ENCODE measurements at regions of chr17 and their contacts with region 1.

Region 1: GRCh38 chr17:2244545-2245525 is 58.8 kb downstream of the SMG6 start:
- DNase-seq: peak; percentile 63 to 82 (median 74)
- ATAC-seq: peak; percentile 100
- H3K4me3 ChIP-seq: no peak overlapping the region
- H3K4me3 Mint-ChIP-seq: peak overlapping the region in 1 of 10 donors; percentile 52
- H3K27ac ChIP-seq: no peak overlapping the region
- H3K27ac Mint-ChIP-seq: peak overlapping the region in 7 of 9 donors; percentile 60 to 96 (median 87)
- H3K4me1 ChIP-seq: peaks cover 0 to 6% of the 10 kb centered on the region in 2 donors
- H3K4me1 Mint-ChIP-seq: peaks cover 9 to 82% (median 39%) of the 10 kb centered on the region in 7 donors
- H3K27me3 ChIP-seq: no peaks in the 10 kb centered on the region
- H3K27me3 Mint-ChIP-seq: no peaks in the 10 kb centered on the region

Region 2: DNA sequence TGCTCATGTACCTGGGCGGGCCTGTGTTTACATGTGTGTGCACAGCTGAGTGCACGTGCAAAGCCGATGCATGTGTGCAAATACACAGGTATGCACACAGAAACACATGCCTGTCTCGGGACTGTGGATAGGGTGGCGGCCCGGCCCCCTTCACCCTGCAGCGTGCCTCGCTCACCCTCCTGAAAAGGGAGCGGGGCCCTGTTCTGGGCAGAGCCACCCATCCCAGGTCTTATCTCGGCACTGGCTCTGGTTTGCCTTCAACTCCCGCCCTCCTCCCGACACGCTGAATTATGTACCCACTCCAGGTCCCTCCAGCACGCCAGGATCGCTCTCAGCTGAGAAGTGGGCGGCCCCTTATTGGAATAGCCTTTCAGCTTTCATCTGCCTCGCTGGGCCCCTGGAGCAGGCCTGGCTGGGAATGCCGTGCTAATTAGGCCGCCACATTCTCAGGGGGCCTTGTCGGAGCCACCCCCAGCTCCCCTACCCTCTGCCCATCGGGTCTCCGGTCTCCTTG is 297.5 kb before region 1 on chr17:
- CTCF ChIA-PET with region 1: no interaction called
- POLR2A ChIA-PET with region 1: no interaction called
- intact Hi-C with region 1: no loop called
- DNase-seq: no peak
- ATAC-seq: no peak
- H3K4me3 ChIP-seq: no peak overlapping the region
- H3K4me3 Mint-ChIP-seq: no peak overlapping the region
- H3K27ac ChIP-seq: no peak overlapping the region
- H3K27ac Mint-ChIP-seq: no peak overlapping the region
- H3K4me1 ChIP-seq: no peaks in the 10 kb centered on the region
- H3K4me1 Mint-ChIP-seq: peaks cover 0 to 4% (median 0%) of the 10 kb centered on the region in 7 donors
- H3K27me3 ChIP-seq: no peaks in the 10 kb centered on the region
- H3K27me3 Mint-ChIP-seq: no peaks in the 10 kb centered on the region

Region 3: DNA sequence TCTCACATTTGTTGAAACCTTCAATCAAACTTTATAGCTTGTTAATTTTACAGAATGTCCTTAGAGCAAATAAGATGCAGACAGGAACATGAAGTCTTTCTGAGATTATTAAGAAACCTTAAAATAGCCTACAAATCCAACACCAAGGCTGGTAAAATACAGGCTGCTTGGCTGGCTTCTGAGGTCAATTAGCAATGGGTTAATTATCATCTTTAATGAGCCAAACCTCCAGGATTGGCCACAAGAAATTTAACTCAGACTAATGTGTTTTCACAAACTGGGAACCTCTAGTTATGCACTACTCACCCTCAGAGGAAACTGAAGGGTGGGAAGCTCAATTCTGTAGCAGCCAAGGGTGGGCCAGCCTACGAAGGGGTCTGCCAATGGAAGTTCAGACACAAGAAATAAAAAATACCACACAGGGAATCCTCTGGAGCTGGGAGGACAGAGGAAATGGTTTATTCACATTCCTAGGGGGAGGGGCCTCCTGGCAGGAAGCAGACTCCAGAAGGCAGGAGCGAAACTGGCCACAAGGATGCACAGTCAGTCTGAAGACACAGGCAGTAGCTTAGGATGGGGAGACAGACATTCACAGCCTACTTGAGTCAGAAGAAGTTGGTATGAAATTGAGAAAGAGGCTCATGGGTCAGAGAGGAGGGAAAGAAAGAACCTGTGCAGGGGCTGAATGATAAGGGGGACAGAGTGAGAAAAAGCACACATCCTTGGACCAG is 153.9 kb before region 1 on chr17:
- CTCF ChIA-PET with region 1: interaction called, 12 read pairs
- POLR2A ChIA-PET with region 1: interaction called, 3 read pairs
- intact Hi-C with region 1: no loop called
- DNase-seq: no peak
- ATAC-seq: no peak
- H3K4me3 ChIP-seq: no peak overlapping the region
- H3K4me3 Mint-ChIP-seq: peak overlapping the region; percentile 91 to 99 (median 96)
- H3K27ac ChIP-seq: peak overlapping the region; percentile 69
- H3K27ac Mint-ChIP-seq: peak overlapping the region; percentile 27 to 97 (median 95)
- H3K4me1 ChIP-seq: peaks cover 28 to 30% of the 10 kb centered on the region in 2 donors
- H3K4me1 Mint-ChIP-seq: peaks cover 28 to 76% (median 53%) of the 10 kb centered on the region in 7 donors
- H3K27me3 ChIP-seq: no peaks in the 10 kb centered on the region
- H3K27me3 Mint-ChIP-seq: no peaks in the 10 kb centered on the region

Region 4: DNA sequence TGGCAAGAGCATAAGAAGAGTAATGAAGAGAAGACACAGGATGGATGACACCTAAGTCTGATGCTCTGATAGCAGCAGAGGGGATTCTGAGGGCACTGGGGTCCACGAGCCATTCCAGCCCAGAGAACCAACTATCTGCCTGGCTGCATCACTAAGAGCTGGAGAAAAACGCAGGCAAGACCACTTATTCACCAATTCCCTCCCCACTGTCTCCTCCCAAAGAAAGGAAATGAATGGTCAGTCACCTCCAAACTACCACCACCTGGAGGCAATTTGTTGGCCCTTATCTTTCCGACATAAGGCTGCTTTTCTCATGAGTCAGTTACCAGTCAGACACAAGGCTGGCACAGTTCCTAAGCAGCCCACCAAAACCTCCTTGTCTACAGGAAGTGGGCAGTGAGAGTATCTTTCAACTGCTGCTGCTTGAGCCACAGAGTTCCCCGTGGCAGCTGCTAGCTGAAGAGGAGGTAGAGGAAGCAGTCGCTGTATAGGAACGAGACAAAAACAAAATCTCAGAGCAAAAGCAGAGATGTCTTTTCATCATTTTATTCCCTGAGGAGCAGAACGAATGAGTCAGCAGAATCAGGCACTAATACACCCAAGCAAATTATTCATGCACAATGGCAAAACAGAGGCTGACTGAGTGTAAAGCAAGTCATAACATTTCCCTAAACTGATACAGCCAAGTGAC is 52.3 kb before region 1 on chr17:
- CTCF ChIA-PET with region 1: interaction called, 3 read pairs
- POLR2A ChIA-PET with region 1: interaction called, 3 read pairs
- intact Hi-C with region 1: loop called (anchors 5 to 10 kb)
- DNase-seq: peak in 7 of 9 donors; percentile 22 to 41 (median 31)
- ATAC-seq: peak; percentile 90
- H3K4me3 ChIP-seq: no peak overlapping the region
- H3K4me3 Mint-ChIP-seq: peak overlapping the region; percentile 30 to 80 (median 58)
- H3K27ac ChIP-seq: peak overlapping the region; percentile 27
- H3K27ac Mint-ChIP-seq: peak overlapping the region in 8 of 9 donors; percentile 22 to 86 (median 82)
- H3K4me1 ChIP-seq: peaks cover 16 to 30% of the 10 kb centered on the region in 2 donors
- H3K4me1 Mint-ChIP-seq: peaks cover 34 to 87% (median 63%) of the 10 kb centered on the region in 7 donors
- H3K27me3 ChIP-seq: no peaks in the 10 kb centered on the region
- H3K27me3 Mint-ChIP-seq: no peaks in the 10 kb centered on the region

Region 5: GRCh38 chr17:2259769-2260536 is 15.1 kb after region 1 on chr17:
- CTCF ChIA-PET with region 1: interaction called, 53 read pairs
- POLR2A ChIA-PET with region 1: interaction called, 148 read pairs
- intact Hi-C with region 1: no loop called
- DNase-seq: peak in 8 of 9 donors; percentile 54 to 73 (median 63)
- ATAC-seq: peak; percentile 85
- H3K4me3 ChIP-seq: peak overlapping the region; percentile 36
- H3K4me3 Mint-ChIP-seq: peak overlapping the region; percentile 56 to 86 (median 78)
- H3K27ac ChIP-seq: peak overlapping the region; percentile 83
- H3K27ac Mint-ChIP-seq: peak overlapping the region; percentile 96 to 100 (median 98)
- H3K4me1 ChIP-seq: peaks cover 65 to 72% of the 10 kb centered on the region in 2 donors
- H3K4me1 Mint-ChIP-seq: peaks cover 43 to 80% (median 76%) of the 10 kb centered on the region in 7 donors
- H3K27me3 ChIP-seq: no peaks in the 10 kb centered on the region
- H3K27me3 Mint-ChIP-seq: no peaks in the 10 kb centered on the region

Region 6: GRCh38 chr17:2282297-2282873 is 37.5 kb after region 1 on chr17:
- CTCF ChIA-PET with region 1: interaction called, 90 read pairs
- POLR2A ChIA-PET with region 1: interaction called, 8 read pairs
- intact Hi-C with region 1: loop called (anchors 1 kb)
- DNase-seq: peak in 7 of 9 donors; percentile 37 to 68 (median 58)
- ATAC-seq: peak; percentile 76
- H3K4me3 ChIP-seq: no peak overlapping the region
- H3K4me3 Mint-ChIP-seq: peak overlapping the region in 3 of 10 donors; percentile 12 to 64 (median 28)
- H3K27ac ChIP-seq: no peak overlapping the region
- H3K27ac Mint-ChIP-seq: peak overlapping the region; percentile 44 to 89 (median 72)
- H3K4me1 ChIP-seq: peaks cover 0 to 24% of the 10 kb centered on the region in 2 donors
- H3K4me1 Mint-ChIP-seq: peaks cover 21 to 58% (median 35%) of the 10 kb centered on the region in 7 donors
- H3K27me3 ChIP-seq: no peaks in the 10 kb centered on the region
- H3K27me3 Mint-ChIP-seq: no peaks in the 10 kb centered on the region